IMR-90 (cell line): ENCODE measurements at regions of chr11 and their contacts with region 1.

Region 1: DNA sequence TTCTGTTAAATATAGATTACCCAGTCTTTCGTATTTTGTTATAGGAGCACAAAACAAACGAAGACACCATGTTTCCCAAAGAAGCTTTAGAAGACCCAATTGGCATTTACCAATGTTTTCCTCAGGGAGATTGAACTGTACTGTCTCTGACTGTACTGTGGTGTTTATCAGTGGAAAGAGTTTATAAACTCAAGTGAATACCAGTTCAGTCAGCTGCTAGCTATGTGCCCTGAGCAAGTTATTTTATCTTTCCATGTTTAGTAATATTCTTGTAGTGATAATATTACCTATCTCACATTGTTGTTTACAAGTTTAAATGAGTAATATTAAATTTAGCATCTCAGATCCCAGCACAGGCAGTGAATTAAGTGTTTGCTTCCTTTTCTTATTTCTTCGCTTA is 773.2 kb downstream of the KCNA4 start:
- DNase-seq: peak; percentile 72
- ATAC-seq: peak; percentile 97
- H3K4me3 ChIP-seq: no peak overlapping the region
- H3K27ac ChIP-seq: peak overlapping the region; percentile 87
- H3K4me1 ChIP-seq: peaks cover 3% of the 10 kb centered on the region; the same call in 1 of the 2 replicates
- H3K27me3 ChIP-seq: no peaks in the 10 kb centered on the region
- CTCF ChIP-seq: no peak
- POLR2A ChIP-seq: no peak
- RAD21 ChIP-seq: no peak

Region 2: DNA sequence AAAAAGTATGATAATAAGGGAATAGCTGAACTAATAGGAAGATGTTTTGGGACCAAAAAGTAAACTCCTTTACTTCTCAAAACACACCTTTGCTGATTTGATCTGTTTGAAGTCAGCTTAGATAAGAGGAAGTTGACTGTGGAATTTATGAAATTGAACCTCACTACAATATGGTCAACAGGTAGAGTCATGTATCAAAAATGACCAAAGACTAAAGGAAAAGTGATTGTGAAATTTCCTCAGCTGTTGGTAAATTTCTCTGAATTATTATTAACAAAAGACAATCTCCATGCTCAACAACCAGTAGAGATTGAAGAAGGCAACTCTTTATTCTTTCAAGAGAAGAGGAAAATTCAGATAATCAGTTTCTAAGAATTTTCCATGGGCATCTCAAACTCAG is 53.3 kb before region 1 on chr11:
- CTCF ChIA-PET with region 1: interaction called, 3 read pairs
- POLR2A ChIA-PET with region 1: no interaction called
- dilution Hi-C with region 1: no loop called
- in situ Hi-C with region 1: no loop called
- intact Hi-C with region 1: loop called (anchors 10 kb)
- DNase-seq: no peak
- ATAC-seq: no peak
- H3K4me3 ChIP-seq: no peak overlapping the region
- H3K27ac ChIP-seq: no peak overlapping the region
- H3K4me1 ChIP-seq: peaks cover 4% of the 10 kb centered on the region
- H3K27me3 ChIP-seq: no peaks in the 10 kb centered on the region
- CTCF ChIP-seq: no peak
- POLR2A ChIP-seq: no peak
- RAD21 ChIP-seq: no peak

Region 3: GRCh38 chr11:29490951-29491350 is 247.3 kb after region 1 on chr11:
- CTCF ChIA-PET with region 1: no interaction called
- POLR2A ChIA-PET with region 1: no interaction called
- dilution Hi-C with region 1: no loop called
- in situ Hi-C with region 1: no loop called
- intact Hi-C with region 1: no loop called
- DNase-seq: no peak
- ATAC-seq: no peak
- H3K4me3 ChIP-seq: no peak overlapping the region
- H3K27ac ChIP-seq: no peak overlapping the region
- H3K4me1 ChIP-seq: no peaks in the 10 kb centered on the region
- H3K27me3 ChIP-seq: no peaks in the 10 kb centered on the region
- CTCF ChIP-seq: no peak
- POLR2A ChIP-seq: no peak
- RAD21 ChIP-seq: no peak